CD4-positive, alpha-beta T cell (primary cell): ENCODE measurements at regions of chr2 and their contacts with region 1.

Region 1: GRCh38 chr2:119759451-119760236 is at the start of gene PTPN4:
- DNase-seq: peak; percentile 91 to 99 (median 95)
- ATAC-seq: peak; percentile 88
- H3K4me3 ChIP-seq: peak within 1 kb of the TSS; percentile 92
- H3K4me3 Mint-ChIP-seq: peak within 1 kb of the TSS; percentile 97
- H3K27ac ChIP-seq: peak within 1 kb of the TSS; percentile 86 to 91
- H3K27ac Mint-ChIP-seq: peak within 1 kb of the TSS; percentile 94
- H3K4me1 ChIP-seq: peaks cover 9% of the 10 kb centered on the region
- H3K4me1 Mint-ChIP-seq: peaks cover 55% of the 10 kb centered on the region
- H3K27me3 ChIP-seq: no peaks in the 10 kb centered on the region
- H3K27me3 Mint-ChIP-seq: no peaks in the 10 kb centered on the region
- CTCF ChIP-seq: no peak
- total RNA-seq, gene PTPN4: 96.9 to 102 TPM

Region 2: GRCh38 chr2:119678998-119679710 is 80.5 kb before region 1 on chr2 and contains the start of gene TMEM177:
- CTCF ChIA-PET with region 1: interaction called, 3 read pairs
- POLR2A ChIA-PET with region 1: interaction called, 29 read pairs
- intact Hi-C with region 1: loop called in 1 of 2 experiments (anchors 2 kb)
- DNase-seq: peak; percentile 74 to 94 (median 87)
- ATAC-seq: peak; percentile 81
- H3K4me3 ChIP-seq: peak within 1 kb of the TSS; percentile 97
- H3K4me3 Mint-ChIP-seq: peak within 1 kb of the TSS; percentile 82
- H3K27ac ChIP-seq: peak within 1 kb of the TSS; percentile 56 to 67
- H3K27ac Mint-ChIP-seq: peak within 1 kb of the TSS; percentile 91
- H3K4me1 ChIP-seq: peaks cover 27% of the 10 kb centered on the region
- H3K4me1 Mint-ChIP-seq: peaks cover 46% of the 10 kb centered on the region
- H3K27me3 ChIP-seq: no peaks in the 10 kb centered on the region
- H3K27me3 Mint-ChIP-seq: no peaks in the 10 kb centered on the region
- CTCF ChIP-seq: no peak
- total RNA-seq, gene TMEM177: 3.6 to 4.0 TPM

Region 3: DNA sequence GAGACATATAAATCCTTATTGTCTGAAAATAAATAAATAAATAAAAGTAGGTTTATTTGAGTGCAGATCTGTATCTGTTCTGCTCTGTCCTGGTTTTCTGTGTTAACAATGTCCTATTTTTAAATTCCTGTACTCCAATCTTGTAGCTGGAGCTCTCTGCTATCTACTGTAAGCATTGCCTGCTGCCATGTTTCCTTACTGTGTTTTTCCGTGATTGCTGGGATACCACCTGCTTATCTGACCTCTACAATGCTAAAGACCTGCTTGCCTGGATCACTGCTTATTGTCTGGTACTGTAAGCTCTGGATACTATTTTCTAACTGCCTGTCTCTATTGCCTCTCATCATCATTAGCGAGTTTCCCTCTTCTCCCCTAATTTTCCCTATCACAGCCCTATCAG is 11.7 kb after region 1 on chr2:
- CTCF ChIA-PET with region 1: no interaction called
- POLR2A ChIA-PET with region 1: interaction called, 23 read pairs
- intact Hi-C with region 1: no loop called
- DNase-seq: no peak
- ATAC-seq: no peak
- H3K4me3 ChIP-seq: no peak overlapping the region
- H3K4me3 Mint-ChIP-seq: peak overlapping the region; percentile 9
- H3K27ac ChIP-seq: no peak overlapping the region
- H3K27ac Mint-ChIP-seq: peak overlapping the region; percentile 7
- H3K4me1 ChIP-seq: peaks cover 21% of the 10 kb centered on the region
- H3K4me1 Mint-ChIP-seq: peaks cover 44% of the 10 kb centered on the region
- H3K27me3 ChIP-seq: no peaks in the 10 kb centered on the region
- H3K27me3 Mint-ChIP-seq: no peaks in the 10 kb centered on the region
- CTCF ChIP-seq: no peak

Region 4: GRCh38 chr2:120012771-120013596 is 253.3 kb after region 1 on chr2 and contains the start of gene EPB41L5:
- CTCF ChIA-PET with region 1: no interaction called
- POLR2A ChIA-PET with region 1: interaction called, 8 read pairs
- intact Hi-C with region 1: loop called in 1 of 2 experiments (anchors 2 kb)
- DNase-seq: peak; percentile 50 to 89 (median 73)
- ATAC-seq: peak; percentile 89
- H3K4me3 ChIP-seq: peak within 1 kb of the TSS; percentile 70
- H3K4me3 Mint-ChIP-seq: peak within 1 kb of the TSS; percentile 87
- H3K27ac ChIP-seq: peak within 1 kb of the TSS in 1 of 2 donors; percentile 21
- H3K27ac Mint-ChIP-seq: peak within 1 kb of the TSS; percentile 62
- H3K4me1 ChIP-seq: peaks cover 7% of the 10 kb centered on the region
- H3K4me1 Mint-ChIP-seq: peaks cover 21% of the 10 kb centered on the region
- H3K27me3 ChIP-seq: no peaks in the 10 kb centered on the region
- H3K27me3 Mint-ChIP-seq: no peaks in the 10 kb centered on the region
- CTCF ChIP-seq: no peak
- total RNA-seq, gene EPB41L5: 4.6 to 5.1 TPM

Region 5: DNA sequence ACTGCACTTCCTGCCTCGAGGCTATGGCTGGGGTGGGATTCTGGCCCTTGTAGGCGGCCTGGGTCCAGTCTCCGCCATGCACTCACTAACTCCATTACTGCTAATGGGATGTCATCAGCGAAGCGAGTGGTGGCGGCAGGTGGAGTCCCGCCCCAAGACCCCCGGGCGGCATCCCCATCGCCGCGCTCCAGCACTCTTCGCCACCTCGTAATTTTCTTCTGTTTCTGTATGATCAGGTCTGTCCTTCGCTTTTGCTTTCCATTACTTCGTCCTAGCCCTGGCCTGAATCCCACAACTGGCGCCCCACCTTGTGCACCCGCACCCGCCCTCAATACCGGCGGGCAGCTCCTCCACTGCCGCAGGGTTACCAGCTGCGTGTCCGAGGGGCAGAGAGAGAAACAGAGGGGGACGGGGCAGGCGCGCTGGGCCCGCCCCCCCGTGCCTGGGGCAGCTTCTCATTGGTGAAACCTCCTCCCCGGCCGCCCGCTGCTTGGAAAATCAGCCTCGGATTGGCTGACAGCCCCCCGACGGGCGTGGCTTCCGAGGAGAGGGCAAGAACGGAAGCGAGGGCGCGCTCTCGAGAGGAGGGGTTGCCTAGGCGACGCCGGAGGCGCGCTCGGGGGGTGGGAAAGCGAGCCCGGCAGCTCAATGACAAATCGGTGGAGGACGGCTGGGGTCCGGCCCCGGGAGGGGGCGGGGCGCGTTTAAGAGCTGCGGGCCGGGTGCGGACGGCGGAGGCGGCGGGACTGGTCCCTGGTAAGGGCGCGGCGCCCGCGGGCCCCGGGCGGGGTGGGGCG is 492.8 kb after region 1 on chr2 and contains the start of gene RALB:
- CTCF ChIA-PET with region 1: no interaction called
- POLR2A ChIA-PET with region 1: interaction called, 7 read pairs
- intact Hi-C with region 1: loop called in 1 of 2 experiments (anchors 2 kb)
- DNase-seq: peak; percentile 95 to 99 (median 98)
- ATAC-seq: peak; percentile 95
- H3K4me3 ChIP-seq: peak within 1 kb of the TSS; percentile 83
- H3K4me3 Mint-ChIP-seq: peak within 1 kb of the TSS; percentile 97
- H3K27ac ChIP-seq: peak within 1 kb of the TSS; percentile 35 to 76
- H3K27ac Mint-ChIP-seq: peak within 1 kb of the TSS; percentile 87
- H3K4me1 ChIP-seq: peaks cover 20% of the 10 kb centered on the region
- H3K4me1 Mint-ChIP-seq: peaks cover 50% of the 10 kb centered on the region
- H3K27me3 ChIP-seq: peaks cover 0 to 3% of the 10 kb centered on the region in 2 experiments
- H3K27me3 Mint-ChIP-seq: peaks cover 8% of the 10 kb centered on the region
- CTCF ChIP-seq: no peak
- total RNA-seq, gene RALB: 3.1 to 3.6 TPM